B cell (primary cell): ENCODE measurements at regions of chr12 and their contacts with region 1.

Region 1: GRCh38 chr12:7959701-7960121 is 23.7 kb upstream of the SLC2A3 start:
- DNase-seq: peak; percentile 67
- ATAC-seq: no peak
- H3K4me3 ChIP-seq: peak overlapping the region; percentile 63 to 91 (median 71)
- H3K4me3 Mint-ChIP-seq: peak overlapping the region; percentile 91
- H3K27ac ChIP-seq: peak overlapping the region; percentile 91 to 94
- H3K27ac Mint-ChIP-seq: peak overlapping the region; percentile 94
- H3K4me1 ChIP-seq: peaks cover 25 to 34% of the 10 kb centered on the region in 2 donors
- H3K4me1 Mint-ChIP-seq: peaks cover 36% of the 10 kb centered on the region
- H3K27me3 ChIP-seq: no peaks in the 10 kb centered on the region
- H3K27me3 Mint-ChIP-seq: no peaks in the 10 kb centered on the region
- CTCF ChIP-seq: no peak

Region 2: DNA sequence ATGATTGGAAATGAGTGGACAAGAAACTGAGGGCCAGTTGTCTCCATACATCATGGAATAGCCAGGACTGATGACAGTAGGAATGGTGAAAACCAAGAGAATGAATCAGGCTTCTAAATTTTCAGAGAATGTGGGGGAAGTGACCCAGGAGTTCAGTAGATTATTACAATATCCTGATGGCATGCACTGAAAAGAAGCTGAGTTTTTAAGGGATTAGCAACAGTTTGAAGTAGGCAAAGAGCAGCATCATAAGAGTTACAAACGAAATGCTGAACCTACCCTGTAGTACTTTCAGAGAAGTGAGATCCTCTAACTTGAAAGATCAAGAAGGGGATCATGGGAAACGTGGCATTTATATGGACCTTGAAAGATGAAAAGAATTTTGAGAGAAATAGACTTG is 100.2 kb before region 1 on chr12:
- CTCF ChIA-PET with region 1: interaction called, 10 read pairs
- POLR2A ChIA-PET with region 1: no interaction called
- intact Hi-C with region 1: no loop called
- DNase-seq: no peak
- ATAC-seq: no peak
- H3K4me3 ChIP-seq: no peak overlapping the region
- H3K4me3 Mint-ChIP-seq: no peak overlapping the region
- H3K27ac ChIP-seq: no peak overlapping the region
- H3K27ac Mint-ChIP-seq: no peak overlapping the region
- H3K4me1 ChIP-seq: peaks cover 3 to 4% of the 10 kb centered on the region in 2 donors
- H3K4me1 Mint-ChIP-seq: peaks cover 9% of the 10 kb centered on the region
- H3K27me3 ChIP-seq: peaks cover 0 to 8% (median 0%) of the 10 kb centered on the region in 4 experiments
- H3K27me3 Mint-ChIP-seq: no peaks in the 10 kb centered on the region
- CTCF ChIP-seq: no peak

Region 3: DNA sequence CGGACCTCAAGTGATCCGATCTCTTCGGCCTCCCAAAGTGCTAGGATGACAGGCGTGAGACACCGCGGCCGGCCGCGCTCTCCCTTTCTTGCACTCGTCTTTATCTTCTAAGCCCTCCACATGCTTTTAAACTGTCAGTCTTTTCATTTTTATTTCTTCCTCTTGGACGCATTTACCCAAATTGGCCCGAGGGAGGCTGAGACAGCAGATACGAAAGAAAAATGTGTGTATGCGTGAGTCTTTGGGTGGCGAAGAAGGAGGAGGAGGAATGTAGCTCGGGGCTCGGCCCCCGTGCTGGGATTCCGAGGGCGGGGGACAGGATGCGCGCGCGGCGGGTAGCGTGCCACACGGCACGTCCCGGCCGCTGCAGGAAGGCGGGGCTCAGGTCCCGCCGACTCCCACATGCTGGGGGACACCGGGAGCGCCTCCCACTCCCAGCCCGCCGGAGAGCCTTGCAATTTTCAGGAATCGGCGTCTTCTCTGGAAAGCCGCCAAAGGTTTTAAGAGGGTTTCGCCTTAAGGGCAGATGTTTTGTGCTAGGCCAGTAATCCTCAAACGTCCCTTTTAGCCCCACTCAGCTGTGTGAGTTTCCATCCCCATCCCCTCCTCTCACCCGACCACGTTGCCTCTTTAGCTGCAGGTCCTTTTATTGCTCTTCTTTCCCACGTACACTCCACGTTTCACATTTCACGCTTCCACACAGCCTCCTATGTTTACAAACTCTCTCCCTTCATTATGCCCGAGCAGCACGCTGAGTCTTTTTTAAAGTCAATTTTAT is 11.0 kb after region 1 on chr12:
- CTCF ChIA-PET with region 1: interaction called, 15 read pairs
- POLR2A ChIA-PET with region 1: interaction called, 17 read pairs
- intact Hi-C with region 1: loop called (anchors 1 kb)
- DNase-seq: peak; percentile 90
- ATAC-seq: peak; percentile 90
- H3K4me3 ChIP-seq: peak overlapping the region; percentile 65 to 94 (median 74)
- H3K4me3 Mint-ChIP-seq: peak overlapping the region; percentile 88
- H3K27ac ChIP-seq: peak overlapping the region; percentile 91 to 96
- H3K27ac Mint-ChIP-seq: peak overlapping the region; percentile 93
- H3K4me1 ChIP-seq: peaks cover 26 to 35% of the 10 kb centered on the region in 2 donors
- H3K4me1 Mint-ChIP-seq: peaks cover 26% of the 10 kb centered on the region
- H3K27me3 ChIP-seq: no peaks in the 10 kb centered on the region
- H3K27me3 Mint-ChIP-seq: no peaks in the 10 kb centered on the region
- CTCF ChIP-seq: peak; percentile 24

Region 4: DNA sequence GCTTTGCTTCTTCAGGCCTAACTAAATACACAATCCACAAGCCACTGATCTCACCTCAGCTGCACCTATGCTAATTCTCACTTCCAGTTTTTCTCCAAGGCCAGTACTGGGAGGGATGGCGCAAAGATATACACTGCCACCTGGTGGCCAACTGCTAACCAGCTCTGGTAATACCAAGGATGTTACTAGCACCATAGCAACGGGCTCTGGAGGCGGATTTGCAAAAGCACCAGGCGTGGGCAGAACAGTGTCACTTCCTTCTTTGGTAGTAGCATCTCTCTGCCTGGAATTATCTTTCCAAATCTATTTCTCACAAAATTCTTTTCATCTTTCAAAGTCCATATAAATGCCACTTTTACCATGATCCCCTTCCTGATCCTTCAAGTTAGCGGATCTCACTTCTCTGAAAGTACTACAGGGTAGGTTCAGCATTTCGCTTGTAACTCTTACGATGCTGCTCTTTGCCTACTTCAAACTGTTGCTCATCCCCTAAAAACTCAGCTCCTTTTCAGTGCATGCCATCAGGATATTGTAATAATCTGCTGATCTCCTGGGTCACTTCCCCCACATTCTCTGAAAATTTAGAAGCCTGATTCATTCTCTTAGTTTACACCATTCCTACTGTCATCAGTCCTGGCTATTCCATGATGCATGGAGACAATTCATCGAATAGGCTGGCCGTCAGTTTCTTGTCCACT is 35.7 kb after region 1 on chr12:
- CTCF ChIA-PET with region 1: interaction called, 65 read pairs
- POLR2A ChIA-PET with region 1: interaction called, 4 read pairs
- intact Hi-C with region 1: loop called (anchors 1 kb)
- DNase-seq: peak; percentile 93
- ATAC-seq: peak; percentile 100
- H3K4me3 ChIP-seq: no peak overlapping the region
- H3K4me3 Mint-ChIP-seq: no peak overlapping the region
- H3K27ac ChIP-seq: peak overlapping the region; percentile 35 to 82
- H3K27ac Mint-ChIP-seq: no peak overlapping the region
- H3K4me1 ChIP-seq: peaks cover 10 to 14% of the 10 kb centered on the region in 2 donors
- H3K4me1 Mint-ChIP-seq: peaks cover 6% of the 10 kb centered on the region
- H3K27me3 ChIP-seq: no peaks in the 10 kb centered on the region
- H3K27me3 Mint-ChIP-seq: no peaks in the 10 kb centered on the region
- CTCF ChIP-seq: peak; percentile 87

Region 5: GRCh38 chr12:8032242-8033152 is 72.8 kb after region 1 on chr12 and contains the start of gene FOXJ2:
- CTCF ChIA-PET with region 1: interaction called, 9 read pairs
- POLR2A ChIA-PET with region 1: interaction called, 6 read pairs
- intact Hi-C with region 1: loop called (anchors 1 kb)
- DNase-seq: peak; percentile 86
- ATAC-seq: peak; percentile 89
- H3K4me3 ChIP-seq: peak within 1 kb of the TSS; percentile 22 to 97 (median 86)
- H3K4me3 Mint-ChIP-seq: peak within 1 kb of the TSS; percentile 90
- H3K27ac ChIP-seq: peak within 1 kb of the TSS; percentile 60 to 86
- H3K27ac Mint-ChIP-seq: peak within 1 kb of the TSS; percentile 89
- H3K4me1 ChIP-seq: peaks cover 42 to 55% of the 10 kb centered on the region in 2 donors
- H3K4me1 Mint-ChIP-seq: peaks cover 47% of the 10 kb centered on the region
- H3K27me3 ChIP-seq: no peaks in the 10 kb centered on the region
- H3K27me3 Mint-ChIP-seq: no peaks in the 10 kb centered on the region
- CTCF ChIP-seq: no peak
- total RNA-seq, gene FOXJ2: 19.4 and 22.0 TPM in 2 replicates